ENCODE measurements at regions of chrX and their contacts with region 1.

Region 1: DNA sequence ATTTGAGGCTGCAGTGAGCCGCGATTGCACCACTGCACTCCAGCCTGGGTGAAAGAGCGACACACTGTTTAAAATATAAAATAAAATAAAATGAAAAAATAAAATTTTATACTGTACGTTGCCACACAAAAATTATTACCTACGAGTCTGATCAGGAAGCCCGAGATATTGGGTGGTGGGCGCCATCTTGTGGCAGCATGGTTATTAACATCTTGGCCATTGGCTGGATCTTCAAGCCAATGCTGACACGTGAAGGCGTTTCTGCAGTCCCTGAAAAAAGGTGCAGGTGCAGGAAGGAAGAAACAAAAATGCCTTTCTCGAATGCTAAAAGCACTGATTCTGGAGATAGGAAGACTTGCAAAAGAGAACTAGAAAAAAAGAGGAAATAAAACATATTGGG is 4.9 kb upstream of the TLR8 start:
- DNase-seq: peak; percentile 56
- H3K4me3 ChIP-seq: no peak overlapping the region
- H3K27ac ChIP-seq: no peak overlapping the region
- H3K4me1 ChIP-seq: no peaks in the 10 kb centered on the region
- H3K27me3 ChIP-seq: no peaks in the 10 kb centered on the region
- CTCF ChIP-seq: peak; percentile 80

Region 2: GRCh38 chrX:12042615-12043014 is 858.9 kb before region 1 on chrX:
- CTCF ChIA-PET with region 1: no interaction called
- POLR2A ChIA-PET with region 1: no interaction called
- intact Hi-C with region 1: no loop called
- DNase-seq: no peak
- H3K4me3 ChIP-seq: no peak overlapping the region
- H3K27ac ChIP-seq: no peak overlapping the region
- H3K4me1 ChIP-seq: no peaks in the 10 kb centered on the region
- H3K27me3 ChIP-seq: peaks cover 3% of the 10 kb centered on the region
- CTCF ChIP-seq: no peak

Region 3: DNA sequence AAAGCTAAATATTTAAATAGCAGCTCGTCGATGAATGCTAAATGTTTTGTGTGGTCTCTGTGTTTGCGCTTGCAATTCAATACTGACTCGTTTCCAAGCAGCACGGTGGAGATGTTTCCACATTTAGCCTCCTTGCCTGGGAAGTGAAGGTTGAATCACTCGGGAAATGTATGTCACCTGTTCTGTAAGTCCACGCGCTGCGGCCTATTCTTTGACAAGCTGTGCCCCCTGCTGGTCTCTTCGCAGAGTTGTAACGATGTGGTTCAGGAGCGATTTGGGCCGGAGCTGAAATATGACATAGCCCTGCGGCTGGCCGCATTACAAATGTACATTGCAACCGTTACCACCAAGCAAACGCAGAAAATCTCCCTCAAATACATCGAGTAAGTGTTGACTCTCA is 199.9 kb before region 1 on chrX:
- CTCF ChIA-PET with region 1: no interaction called
- POLR2A ChIA-PET with region 1: no interaction called
- intact Hi-C with region 1: loop called (anchors 2 kb)
- DNase-seq: peak; percentile 70
- H3K4me3 ChIP-seq: no peak overlapping the region
- H3K27ac ChIP-seq: no peak overlapping the region
- H3K4me1 ChIP-seq: no peaks in the 10 kb centered on the region
- H3K27me3 ChIP-seq: peaks cover 18% of the 10 kb centered on the region
- CTCF ChIP-seq: peak; percentile 69

Region 4: DNA sequence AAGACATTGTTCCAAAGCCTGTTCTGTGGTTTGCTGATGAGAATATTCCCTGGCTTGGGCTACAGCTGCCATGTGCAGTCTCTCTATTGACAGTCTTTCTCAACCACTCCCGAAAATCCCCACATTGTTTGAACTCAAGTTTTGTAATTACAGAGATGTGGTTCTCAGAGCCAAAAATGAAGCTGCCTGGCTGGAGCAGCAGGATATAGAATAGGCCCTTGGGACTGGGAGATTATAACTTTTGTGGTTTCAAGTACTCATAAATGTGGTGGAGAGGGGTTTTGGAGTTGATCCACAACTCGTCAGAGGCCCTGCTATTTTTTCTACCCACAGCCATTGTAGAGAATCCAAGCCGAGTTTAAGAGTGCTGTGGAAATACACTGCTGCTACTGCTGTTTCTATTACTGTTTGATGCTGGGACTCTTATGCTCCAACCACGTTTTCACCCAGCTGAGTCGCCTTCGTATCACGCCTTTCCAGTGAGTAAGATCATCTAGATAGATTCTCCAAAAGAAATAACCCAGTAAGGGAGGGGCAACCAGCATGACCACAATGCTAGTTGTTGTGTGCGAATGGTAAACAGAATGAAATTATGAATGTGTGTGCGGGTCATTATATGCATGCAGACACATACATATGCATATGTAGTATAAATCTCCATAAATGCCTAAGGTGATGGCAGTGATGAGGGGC is 475.5 kb after region 1 on chrX:
- CTCF ChIA-PET with region 1: no interaction called
- POLR2A ChIA-PET with region 1: no interaction called
- intact Hi-C with region 1: no loop called
- DNase-seq: peak; percentile 88
- H3K4me3 ChIP-seq: no peak overlapping the region
- H3K27ac ChIP-seq: peak overlapping the region; percentile 16
- H3K4me1 ChIP-seq: peaks cover 16% of the 10 kb centered on the region
- H3K27me3 ChIP-seq: peaks cover 25% of the 10 kb centered on the region
- CTCF ChIP-seq: no peak